Adrenal gland (tissue), 19 donors: ENCODE measurements at regions of chr18 and their contacts with region 1.

Region 1: GRCh38 chr18:23623040-23623439 is 36.7 kb upstream of the NPC1 start:
- DNase-seq: no peak
- H3K4me3 ChIP-seq: no peak overlapping the region
- H3K27ac ChIP-seq: no peak overlapping the region
- H3K4me1 ChIP-seq: peaks cover 4 to 8% of the 10 kb centered on the region in 2 donors
- H3K27me3 ChIP-seq: no peaks in the 10 kb centered on the region
- CTCF ChIP-seq: no peak
- POLR2A ChIP-seq: no peak

Region 2: GRCh38 chr18:23689616-23690504 is 66.8 kb after region 1 on chr18:
- intact Hi-C with region 1: loop called in 1 of 2 experiments (anchors 5 kb)
- DNase-seq: peak in 4 of 7 donors; percentile 7 to 28 (median 18)
- H3K4me3 ChIP-seq: peak overlapping the region in 2 of 4 donors; percentile 34 to 75
- H3K27ac ChIP-seq: no peak overlapping the region
- H3K4me1 ChIP-seq: peaks cover 6 to 15% of the 10 kb centered on the region in 2 donors
- H3K27me3 ChIP-seq: peaks cover 20% of the 10 kb centered on the region
- CTCF ChIP-seq: no peak
- POLR2A ChIP-seq: no peak

Region 3: GRCh38 chr18:23703057-23703986 is 80.3 kb after region 1 on chr18:
- intact Hi-C with region 1: loop called (anchors 5 kb)
- DNase-seq: peak in 5 of 7 donors; percentile 29 to 68 (median 45)
- H3K4me3 ChIP-seq: no peak overlapping the region
- H3K27ac ChIP-seq: no peak overlapping the region
- H3K4me1 ChIP-seq: no peaks in the 10 kb centered on the region
- H3K27me3 ChIP-seq: no peaks in the 10 kb centered on the region
- CTCF ChIP-seq: peak; percentile 36 to 77 (median 68)
- POLR2A ChIP-seq: no peak

Region 4: DNA sequence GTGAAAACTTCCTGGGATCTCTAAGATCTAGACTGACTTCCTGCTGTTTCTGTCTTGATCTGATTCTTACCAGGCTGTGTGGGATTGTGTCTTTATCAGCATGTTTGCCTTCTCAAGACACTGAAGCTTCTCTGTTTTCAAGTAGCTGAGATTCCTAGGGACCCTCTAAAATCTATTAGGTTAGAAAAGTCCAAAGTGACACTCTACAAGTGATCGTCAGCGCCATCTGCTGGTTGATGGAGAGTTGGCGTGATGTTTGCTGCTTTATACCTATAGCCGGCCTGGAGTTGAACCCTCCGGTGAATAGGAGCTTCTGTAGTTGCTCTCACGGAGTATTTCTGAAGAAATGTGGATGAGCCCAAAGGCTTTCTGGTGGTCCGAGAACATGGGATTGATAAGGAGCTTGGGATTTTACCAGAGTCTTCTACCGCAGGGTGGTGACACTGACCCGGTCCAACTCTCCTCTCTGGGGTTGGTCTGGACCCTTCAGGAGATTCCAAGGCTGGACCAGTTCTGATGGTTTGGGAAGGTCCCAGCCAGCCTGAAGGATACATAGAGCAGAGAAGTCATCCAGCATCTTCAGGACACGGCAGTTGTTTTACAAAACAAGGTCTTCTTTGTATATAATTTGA is 295.5 kb after region 1 on chr18:
- intact Hi-C with region 1: loop called in 1 of 2 experiments (anchors 5 kb)
- DNase-seq: peak; percentile 50 to 89 (median 74)
- H3K4me3 ChIP-seq: no peak overlapping the region
- H3K27ac ChIP-seq: no peak overlapping the region
- H3K4me1 ChIP-seq: no peaks in the 10 kb centered on the region
- H3K27me3 ChIP-seq: no peaks in the 10 kb centered on the region
- CTCF ChIP-seq: peak; percentile 55 to 85 (median 74)
- POLR2A ChIP-seq: no peak